B cell (primary cell): ENCODE measurements at regions of chr5 and their contacts with region 1.

Region 1: DNA sequence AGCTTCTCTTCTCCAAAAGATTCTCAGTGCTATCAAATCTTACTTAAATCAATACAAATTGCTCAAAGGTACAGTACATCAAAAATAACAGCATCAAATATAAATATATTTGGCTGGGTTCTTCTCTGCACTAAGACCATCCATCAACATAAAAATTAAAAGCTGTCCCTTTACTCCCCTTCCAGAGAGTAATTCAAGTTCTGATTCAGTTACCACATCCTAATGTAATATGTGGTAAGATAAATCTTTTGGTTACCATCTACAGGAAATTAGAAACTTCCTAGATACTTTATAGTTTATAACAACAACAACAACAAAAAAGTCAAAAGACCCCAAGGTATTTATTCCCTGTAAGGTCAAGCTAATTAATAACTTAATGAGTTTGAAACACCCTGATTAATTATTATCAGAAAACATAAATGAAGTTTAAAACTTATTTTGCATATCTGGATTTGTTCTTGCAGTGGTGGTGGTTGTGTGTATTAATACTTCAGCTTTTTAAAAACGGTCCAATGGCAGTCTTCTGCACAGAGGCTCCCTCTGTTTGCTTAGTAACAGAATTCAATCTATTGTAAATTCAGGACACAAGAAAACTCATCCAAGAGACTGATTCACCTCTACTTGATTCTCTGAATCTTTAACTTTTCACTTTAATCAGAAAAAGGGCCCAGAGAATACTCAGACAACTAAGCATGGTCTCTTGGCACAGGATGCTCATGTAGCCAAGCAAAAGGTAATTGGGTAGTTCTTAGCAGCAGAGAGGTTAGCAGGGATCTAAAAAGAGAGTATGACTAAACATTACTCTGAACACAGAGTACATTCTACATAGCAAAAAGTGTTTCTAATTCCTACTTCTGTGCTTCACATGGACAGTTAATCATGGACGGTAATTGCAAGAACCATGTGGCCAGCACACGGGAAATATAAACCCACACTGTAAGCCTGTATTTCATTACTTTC is 20.1 kb downstream of the DIAPH1 start:
- DNase-seq: no peak
- ATAC-seq: no peak
- H3K4me3 ChIP-seq: no peak overlapping the region
- H3K4me3 Mint-ChIP-seq: peak overlapping the region; percentile 12
- H3K27ac ChIP-seq: peak overlapping the region in 1 of 2 donors; percentile 61
- H3K27ac Mint-ChIP-seq: no peak overlapping the region
- H3K4me1 ChIP-seq: peaks cover 23 to 40% of the 10 kb centered on the region in 2 donors
- H3K4me1 Mint-ChIP-seq: peaks cover 61% of the 10 kb centered on the region
- H3K27me3 ChIP-seq: no peaks in the 10 kb centered on the region
- H3K27me3 Mint-ChIP-seq: no peaks in the 10 kb centered on the region
- CTCF ChIP-seq: no peak

Region 2: DNA sequence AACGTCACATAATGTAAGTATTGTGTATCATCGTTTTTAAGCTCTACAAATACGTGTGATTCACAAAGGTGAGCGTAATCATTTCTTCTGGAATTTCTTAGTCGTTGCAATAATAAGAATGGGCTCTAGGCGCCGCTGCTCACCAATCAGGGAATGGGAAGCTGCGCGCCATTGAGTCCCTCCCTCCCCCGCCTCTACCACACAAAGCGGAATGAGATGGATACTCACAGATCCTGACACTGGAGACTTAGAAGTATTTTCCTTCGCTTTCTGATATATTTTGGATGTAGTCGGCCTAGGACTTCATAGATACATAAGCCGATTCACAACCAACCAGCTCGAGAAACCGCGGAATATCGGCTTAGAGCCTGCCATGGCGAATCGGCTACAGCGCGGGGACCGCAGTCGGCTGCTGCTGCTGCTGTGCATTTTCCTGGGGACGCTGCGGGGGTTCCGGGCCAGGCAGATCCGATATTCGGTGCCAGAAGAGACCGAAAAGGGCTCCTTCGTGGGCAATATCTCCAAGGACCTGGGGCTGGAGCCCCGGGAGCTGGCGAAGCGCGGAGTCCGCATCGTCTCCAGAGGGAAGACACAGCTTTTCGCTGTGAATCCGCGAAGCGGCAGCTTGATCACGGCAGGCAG is 177.7 kb before region 1 on chr5 and contains the start of gene PCDHGA11:
- CTCF ChIA-PET with region 1: no interaction called
- POLR2A ChIA-PET with region 1: no interaction called
- intact Hi-C with region 1: no loop called
- DNase-seq: peak; percentile 68
- ATAC-seq: peak; percentile 68
- H3K4me3 ChIP-seq: peak within 1 kb of the TSS; percentile 24 to 53 (median 52)
- H3K4me3 Mint-ChIP-seq: peak within 1 kb of the TSS; percentile 87
- H3K27ac ChIP-seq: no peak within 1 kb of the TSS
- H3K27ac Mint-ChIP-seq: peak within 1 kb of the TSS; percentile 48
- H3K4me1 ChIP-seq: peaks cover 10 to 12% of the 10 kb centered on the region in 2 donors
- H3K4me1 Mint-ChIP-seq: peaks cover 15% of the 10 kb centered on the region
- H3K27me3 ChIP-seq: peaks cover 2 to 71% (median 58%) of the 10 kb centered on the region in 4 experiments
- H3K27me3 Mint-ChIP-seq: peaks cover 57% of the 10 kb centered on the region
- CTCF ChIP-seq: peak; percentile 72
- total RNA-seq, gene PCDHGA11: 1.5 and 1.8 TPM in 2 replicates

Region 3: DNA sequence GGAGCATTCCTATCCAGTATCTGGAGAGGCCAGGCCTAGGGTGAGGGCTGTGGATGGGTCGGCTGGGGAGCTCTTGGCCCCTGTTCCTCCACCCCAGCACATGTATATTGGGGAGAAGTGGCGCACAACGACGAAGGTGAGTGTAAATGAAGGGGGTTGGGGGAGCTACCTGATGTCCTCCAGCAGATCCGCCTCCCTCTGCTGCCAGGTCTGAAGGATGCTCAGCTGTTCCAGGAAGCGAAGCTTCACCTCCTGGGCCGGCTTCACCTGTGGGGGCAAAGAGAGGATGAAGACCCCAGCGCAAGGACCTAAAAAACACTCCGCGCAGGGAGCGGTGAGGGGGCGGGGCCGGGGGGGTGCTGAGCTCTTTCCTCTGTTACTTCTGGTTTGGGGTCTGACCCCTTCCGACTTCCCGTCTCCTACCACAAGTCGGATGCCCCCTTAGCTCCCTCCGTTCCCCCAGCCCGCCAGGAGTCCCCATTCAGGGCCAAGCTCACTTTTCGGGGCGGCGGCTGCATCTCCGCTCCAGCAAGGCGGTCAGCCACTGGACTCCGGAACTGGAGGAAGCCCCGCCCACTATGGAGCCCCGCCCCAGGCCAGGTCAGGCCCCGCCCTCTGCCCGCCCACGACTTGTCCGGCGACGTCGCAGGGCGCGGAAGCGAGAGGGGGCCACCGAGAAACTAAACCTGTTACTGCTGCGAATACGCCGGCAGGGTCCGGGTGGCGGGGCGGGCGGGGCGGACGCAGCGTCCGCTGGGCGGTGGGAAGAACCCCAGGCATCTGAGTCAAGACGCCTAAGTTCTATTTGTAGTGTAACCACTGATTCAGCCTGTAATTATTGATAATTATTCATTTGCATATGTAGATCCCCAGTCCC is 52.4 kb after region 1 on chr5 and contains the start of gene FCHSD1:
- CTCF ChIA-PET with region 1: interaction called, 22 read pairs
- POLR2A ChIA-PET with region 1: no interaction called
- intact Hi-C with region 1: no loop called
- DNase-seq: peak; percentile 89
- ATAC-seq: peak; percentile 100
- H3K4me3 ChIP-seq: peak within 1 kb of the TSS; percentile 53 to 84 (median 70)
- H3K4me3 Mint-ChIP-seq: peak within 1 kb of the TSS; percentile 99
- H3K27ac ChIP-seq: peak within 1 kb of the TSS; percentile 60 to 82
- H3K27ac Mint-ChIP-seq: peak within 1 kb of the TSS; percentile 98
- H3K4me1 ChIP-seq: peaks cover 14 to 22% of the 10 kb centered on the region in 2 donors
- H3K4me1 Mint-ChIP-seq: peaks cover 34% of the 10 kb centered on the region
- H3K27me3 ChIP-seq: peaks cover 0 to 8% (median 0%) of the 10 kb centered on the region in 4 experiments
- H3K27me3 Mint-ChIP-seq: peaks cover 7% of the 10 kb centered on the region
- CTCF ChIP-seq: no peak
- total RNA-seq, gene FCHSD1: 114 and 123 TPM in 2 replicates